ENCODE measurements at regions of chr7 and their contacts with region 1.

Region 1: DNA sequence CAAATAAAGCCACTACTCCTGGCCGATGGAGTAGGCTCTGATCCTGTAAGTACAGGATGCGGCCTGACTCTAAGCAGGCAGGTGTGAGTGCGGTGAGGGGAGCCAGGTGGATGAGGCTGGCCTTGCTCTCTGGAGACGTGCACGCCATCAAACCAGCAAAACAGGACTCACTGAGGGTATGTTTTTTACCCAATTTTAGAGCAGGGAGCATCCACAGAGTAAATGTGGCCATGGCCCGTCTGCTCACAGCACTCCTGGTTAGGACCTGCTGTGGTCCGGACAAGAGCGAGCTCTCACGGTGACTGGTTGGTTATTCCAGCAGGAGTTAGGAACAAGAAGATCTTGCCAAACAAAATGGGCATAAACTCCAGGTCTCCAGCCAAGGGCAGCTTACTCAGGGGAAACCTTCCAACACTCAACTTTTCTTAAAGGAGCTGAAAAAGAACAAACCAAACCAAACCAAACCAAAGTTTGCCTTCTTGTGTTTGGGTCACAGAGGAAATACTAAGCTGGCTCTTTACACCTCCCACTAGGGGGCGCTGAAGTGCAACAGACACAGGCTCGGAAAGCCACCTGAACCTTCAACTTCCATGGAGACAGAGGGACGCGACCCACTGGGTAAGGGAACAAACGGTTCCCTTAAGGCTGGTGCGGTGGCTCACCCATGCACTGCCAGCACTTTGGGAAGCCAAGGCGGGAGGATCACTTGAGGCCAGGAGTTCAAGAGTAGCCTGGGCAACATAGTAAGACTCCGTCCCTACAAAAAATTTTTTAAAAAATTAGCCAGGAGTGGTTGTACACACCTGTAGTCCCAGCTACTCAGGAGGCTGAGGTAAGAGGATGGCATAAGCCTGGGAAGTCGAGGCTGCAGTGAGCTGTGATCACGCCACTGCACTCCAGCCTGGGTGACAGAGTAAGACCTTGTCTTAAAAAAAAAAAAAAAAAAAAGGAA is 122.4 kb downstream of the CLEC2L start:
- DNase-seq: peak; percentile 93
- H3K4me3 Mint-ChIP-seq: no peak overlapping the region
- H3K27ac Mint-ChIP-seq: peak overlapping the region; percentile 43
- H3K4me1 Mint-ChIP-seq: peaks cover 21% of the 10 kb centered on the region
- H3K27me3 Mint-ChIP-seq: no peaks in the 10 kb centered on the region
- CTCF ChIP-seq: peak; percentile 93

Region 2: GRCh38 chr7:139620676-139621344 is 25.0 kb before region 1 on chr7:
- CTCF ChIA-PET with region 1: interaction called, 124 read pairs
- POLR2A ChIA-PET with region 1: no interaction called
- intact Hi-C with region 1: no loop called
- DNase-seq: peak; percentile 39
- H3K4me3 Mint-ChIP-seq: no peak overlapping the region
- H3K27ac Mint-ChIP-seq: no peak overlapping the region
- H3K4me1 Mint-ChIP-seq: peaks cover 10% of the 10 kb centered on the region
- H3K27me3 Mint-ChIP-seq: no peaks in the 10 kb centered on the region
- CTCF ChIP-seq: peak; percentile 73

Region 3: DNA sequence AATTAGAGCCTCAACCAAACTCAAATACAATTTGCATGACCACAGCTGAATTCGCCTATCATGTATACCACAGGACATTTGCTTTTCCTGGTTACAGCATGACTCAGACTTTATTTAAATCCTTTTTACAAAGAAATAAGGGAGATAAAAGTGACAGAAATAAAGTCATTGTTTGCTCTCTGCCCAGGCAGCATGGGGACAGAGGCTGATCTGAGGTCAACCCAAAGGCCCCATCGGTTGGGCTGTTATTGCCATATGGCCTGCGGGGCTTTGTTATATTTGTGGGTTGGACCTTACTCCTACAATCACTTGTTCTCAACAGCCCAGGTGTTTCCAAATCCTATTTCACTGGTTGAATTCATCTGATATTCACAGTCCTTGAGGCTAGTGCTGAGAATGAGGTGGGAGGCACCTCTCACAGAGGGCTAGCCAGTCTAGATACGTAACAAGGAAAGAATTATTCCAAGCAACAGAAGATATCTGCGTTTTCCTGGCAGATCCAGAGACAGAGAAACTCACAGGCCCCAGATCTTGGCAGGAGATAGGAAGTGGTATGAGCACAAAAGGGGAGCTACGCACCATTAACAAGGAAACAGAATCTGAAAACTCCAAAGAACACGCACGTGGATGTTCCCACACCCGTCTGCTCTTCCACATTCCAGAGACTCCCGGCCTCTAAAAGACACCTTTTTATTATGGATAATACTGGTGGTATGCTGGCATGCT is 14.6 kb after region 1 on chr7:
- CTCF ChIA-PET with region 1: interaction called, 64 read pairs
- POLR2A ChIA-PET with region 1: interaction called, 4 read pairs
- intact Hi-C with region 1: no loop called
- DNase-seq: no peak
- H3K4me3 Mint-ChIP-seq: no peak overlapping the region
- H3K27ac Mint-ChIP-seq: no peak overlapping the region
- H3K4me1 Mint-ChIP-seq: peaks cover 73% of the 10 kb centered on the region
- H3K27me3 Mint-ChIP-seq: no peaks in the 10 kb centered on the region
- CTCF ChIP-seq: no peak

Region 4: DNA sequence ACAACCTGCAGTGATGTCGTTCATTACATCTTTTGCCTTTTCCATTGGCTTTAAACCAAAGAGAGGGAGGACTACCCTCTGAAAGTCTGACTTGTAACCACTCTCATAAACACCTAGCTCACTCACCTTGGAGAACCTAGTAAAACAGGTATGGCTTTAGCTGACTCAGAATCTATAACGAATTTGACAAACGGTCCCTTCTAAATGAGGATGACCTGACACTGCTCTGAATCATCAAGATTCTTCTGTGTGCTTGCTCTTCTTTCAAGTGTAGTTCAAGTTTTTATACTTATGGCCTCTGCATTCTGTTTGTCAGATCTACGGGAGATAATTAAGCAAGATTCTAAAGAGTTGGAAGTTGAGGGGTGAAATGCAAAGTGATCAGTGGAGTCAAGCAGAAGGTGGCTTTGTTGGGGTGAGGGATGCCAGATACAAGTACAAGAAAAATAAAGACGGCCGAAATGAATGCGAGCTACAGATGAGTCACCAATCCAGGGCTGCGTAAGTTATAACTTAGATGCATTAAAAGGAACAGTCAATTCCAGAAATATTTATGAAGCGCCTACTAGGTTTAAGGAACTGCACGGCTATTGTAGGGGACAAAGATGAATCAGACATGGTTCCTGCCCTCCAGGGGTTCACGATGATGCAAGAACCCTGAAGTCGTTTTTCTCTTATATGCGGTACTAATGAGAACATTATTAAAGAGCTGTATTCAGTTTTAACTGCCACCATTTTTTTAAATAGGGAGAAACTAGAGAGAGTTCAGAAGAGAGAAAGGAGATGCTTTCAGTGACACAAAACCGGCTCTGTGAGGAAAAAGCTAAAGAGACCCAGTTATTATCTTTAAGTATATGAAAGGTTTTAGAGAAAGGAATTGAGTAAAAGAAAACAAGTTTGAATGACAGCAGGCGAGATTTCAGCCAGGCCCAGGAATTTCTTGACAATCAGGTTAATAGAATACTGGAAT is 125.4 kb after region 1 on chr7:
- CTCF ChIA-PET with region 1: interaction called, 33 read pairs
- POLR2A ChIA-PET with region 1: interaction called, 3 read pairs
- intact Hi-C with region 1: loop called (anchors 1 kb)
- DNase-seq: peak; percentile 91
- H3K4me3 Mint-ChIP-seq: peak overlapping the region; percentile 63
- H3K27ac Mint-ChIP-seq: peak overlapping the region; percentile 98
- H3K4me1 Mint-ChIP-seq: peaks cover 64% of the 10 kb centered on the region
- H3K27me3 Mint-ChIP-seq: no peaks in the 10 kb centered on the region
- CTCF ChIP-seq: no peak

Region 5: GRCh38 chr7:139987691-139988516 is 342.1 kb after region 1 on chr7:
- CTCF ChIA-PET with region 1: interaction called, 30 read pairs
- POLR2A ChIA-PET with region 1: no interaction called
- intact Hi-C with region 1: no loop called
- DNase-seq: no peak
- H3K4me3 Mint-ChIP-seq: no peak overlapping the region
- H3K27ac Mint-ChIP-seq: no peak overlapping the region
- H3K4me1 Mint-ChIP-seq: peaks cover 6% of the 10 kb centered on the region
- H3K27me3 Mint-ChIP-seq: peaks cover 24% of the 10 kb centered on the region
- CTCF ChIP-seq: no peak

Measured in MCF 10A (cell line).